Naive thymus-derived CD4-positive, alpha-beta T cell (primary cell): ENCODE measurements at regions of chr1 and their contacts with region 1.

Region 1: DNA sequence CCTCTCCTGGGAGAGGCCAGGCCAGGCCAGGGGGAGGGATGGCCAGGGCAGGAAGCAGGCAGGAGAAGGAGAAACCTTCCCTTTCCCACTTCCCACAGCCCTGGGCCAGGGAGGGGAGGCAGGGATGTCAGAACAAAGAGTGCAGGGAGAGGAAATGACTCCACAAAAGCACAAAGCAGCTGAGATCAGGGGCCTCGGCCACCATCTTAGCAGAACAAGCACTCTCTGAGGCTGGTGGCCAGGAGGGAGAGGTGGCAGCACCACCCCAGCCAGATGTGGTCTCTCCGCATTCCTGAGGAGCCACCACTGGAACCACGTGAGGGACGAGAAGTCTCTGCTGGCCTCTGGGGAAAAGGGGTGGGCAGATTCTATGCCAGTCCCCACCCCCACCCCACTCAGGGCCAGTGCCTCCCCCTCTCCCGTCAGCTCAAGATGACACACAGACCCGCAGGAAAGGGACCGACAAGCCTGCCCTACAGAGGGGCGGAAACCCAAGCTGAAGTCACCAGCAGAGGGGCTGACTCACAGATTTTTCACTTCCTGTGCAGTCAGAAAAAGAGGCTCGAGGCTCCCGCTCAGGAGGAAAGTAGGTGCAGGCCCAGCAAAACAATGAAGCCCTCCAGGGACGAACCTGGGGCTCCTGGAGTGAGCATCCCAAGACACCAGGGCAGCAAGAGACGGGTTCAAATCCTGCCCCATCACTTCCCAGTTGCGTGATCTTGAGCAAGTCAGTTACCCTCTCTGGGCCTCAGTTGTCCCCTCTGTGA is 24.1 kb upstream of the ALDH4A1 start:
- DNase-seq: peak; percentile 43 to 84 (median 73)
- ATAC-seq: peak; percentile 86
- H3K4me3 ChIP-seq: peak overlapping the region; percentile 84
- H3K4me3 Mint-ChIP-seq: peak overlapping the region; percentile 73 to 93 (median 83)
- H3K27ac ChIP-seq: peak overlapping the region; percentile 71
- H3K27ac Mint-ChIP-seq: peak overlapping the region; percentile 57 to 99 (median 95)
- H3K4me1 ChIP-seq: peaks cover 58 to 73% of the 10 kb centered on the region in 2 donors
- H3K4me1 Mint-ChIP-seq: peaks cover 34 to 90% (median 80%) of the 10 kb centered on the region in 7 donors
- H3K27me3 ChIP-seq: no peaks in the 10 kb centered on the region
- H3K27me3 Mint-ChIP-seq: no peaks in the 10 kb centered on the region

Region 2: GRCh38 chr1:18913065-18913835 is 13.2 kb before region 1 on chr1:
- CTCF ChIA-PET with region 1: interaction called, 58 read pairs
- POLR2A ChIA-PET with region 1: interaction called, 8 read pairs
- intact Hi-C with region 1: loop called (anchors 1 kb)
- DNase-seq: peak; percentile 53 to 80 (median 61)
- ATAC-seq: peak; percentile 85
- H3K4me3 ChIP-seq: no peak overlapping the region
- H3K4me3 Mint-ChIP-seq: no peak overlapping the region
- H3K27ac ChIP-seq: no peak overlapping the region
- H3K27ac Mint-ChIP-seq: peak overlapping the region in 4 of 9 donors; percentile 59 to 84 (median 77)
- H3K4me1 ChIP-seq: peaks cover 0 to 4% of the 10 kb centered on the region in 2 donors
- H3K4me1 Mint-ChIP-seq: peaks cover 2 to 15% (median 9%) of the 10 kb centered on the region in 7 donors
- H3K27me3 ChIP-seq: no peaks in the 10 kb centered on the region
- H3K27me3 Mint-ChIP-seq: no peaks in the 10 kb centered on the region

Region 3: DNA sequence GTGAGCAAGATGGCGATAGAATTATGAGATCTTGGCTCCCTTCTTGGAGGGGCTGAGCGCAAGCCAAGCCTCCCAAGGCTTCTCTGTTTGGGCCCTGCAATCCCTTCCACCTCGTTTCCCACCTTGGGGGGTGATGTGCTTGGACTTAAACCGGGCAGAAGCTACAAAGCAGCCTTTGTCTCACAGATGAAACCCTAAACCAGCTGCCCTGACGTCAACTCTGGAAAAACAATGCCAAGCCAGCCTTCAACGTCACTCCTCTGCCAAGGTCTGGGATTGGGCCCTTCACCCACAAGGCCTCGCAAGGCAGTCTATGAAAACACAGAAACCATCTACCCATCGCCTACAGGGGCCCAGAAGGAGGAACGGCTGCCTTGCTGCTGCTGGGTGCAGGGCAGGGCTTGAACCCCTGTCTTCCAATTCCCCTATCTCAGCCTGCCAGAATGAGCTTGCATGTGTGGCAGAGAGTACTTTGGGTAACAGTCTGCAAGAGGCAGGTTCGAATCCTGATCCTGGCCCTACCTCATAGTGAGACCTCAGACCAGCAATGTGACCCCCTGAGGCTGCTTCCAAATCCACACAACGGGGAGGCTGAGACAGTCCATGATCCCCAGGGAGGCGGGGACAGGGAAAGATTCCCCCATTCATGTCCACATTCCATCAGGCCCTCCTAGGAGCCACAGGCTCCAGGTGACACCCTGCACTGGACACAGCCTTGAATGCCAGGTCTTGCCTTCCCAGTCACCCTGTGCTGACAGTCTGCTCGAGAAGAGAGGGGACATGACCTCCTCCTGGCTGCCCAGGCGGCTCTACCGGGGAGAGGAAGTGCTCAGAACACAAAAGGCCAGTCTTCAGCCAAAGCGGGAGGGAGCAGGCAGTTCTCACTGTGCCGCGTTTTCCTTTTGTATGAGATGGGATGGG is 15.0 kb after region 1 on chr1:
- CTCF ChIA-PET with region 1: interaction called, 7 read pairs
- POLR2A ChIA-PET with region 1: interaction called, 13 read pairs
- intact Hi-C with region 1: no loop called
- DNase-seq: no peak
- ATAC-seq: peak; percentile 9
- H3K4me3 ChIP-seq: no peak overlapping the region
- H3K4me3 Mint-ChIP-seq: no peak overlapping the region
- H3K27ac ChIP-seq: no peak overlapping the region
- H3K27ac Mint-ChIP-seq: peak overlapping the region in 4 of 9 donors; percentile 7 to 76 (median 29)
- H3K4me1 ChIP-seq: peaks cover 53 to 59% of the 10 kb centered on the region in 2 donors
- H3K4me1 Mint-ChIP-seq: peaks cover 34 to 80% (median 69%) of the 10 kb centered on the region in 7 donors
- H3K27me3 ChIP-seq: no peaks in the 10 kb centered on the region
- H3K27me3 Mint-ChIP-seq: no peaks in the 10 kb centered on the region

Region 4: DNA sequence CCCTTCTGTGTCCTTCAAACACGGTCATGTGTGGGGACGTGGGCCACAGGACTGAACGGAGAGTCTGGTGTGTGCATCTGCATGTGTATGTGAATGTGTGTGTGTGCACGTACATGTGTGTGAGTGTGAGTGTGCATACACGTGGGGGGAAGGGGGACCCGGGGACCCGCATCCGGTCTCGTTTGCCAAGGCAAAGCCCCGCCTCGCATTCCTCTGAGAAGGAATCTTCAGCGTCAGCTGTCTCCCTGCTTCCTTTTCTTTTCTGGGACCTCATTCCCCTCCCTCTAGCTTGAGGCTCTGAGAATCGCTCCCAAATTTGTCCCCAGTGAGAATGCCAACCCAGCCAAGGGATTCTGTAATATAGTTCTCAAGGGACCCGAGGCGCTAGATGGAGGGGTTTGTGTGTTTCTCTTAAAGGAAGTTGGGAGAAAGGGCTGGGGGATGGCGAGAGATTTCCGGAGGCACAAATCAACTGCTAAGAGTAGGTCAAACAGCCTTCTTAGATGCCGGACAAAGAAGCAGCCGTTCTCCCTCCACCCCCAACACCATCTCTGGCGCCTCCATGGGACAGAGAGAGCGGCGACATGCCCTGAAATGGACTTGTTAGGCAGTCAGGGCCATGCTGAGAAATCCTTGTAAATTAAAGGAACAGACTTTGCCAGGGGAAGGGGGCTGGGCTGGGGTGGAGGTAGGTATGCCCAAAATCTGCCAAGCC is 23.3 kb after region 1 on chr1:
- CTCF ChIA-PET with region 1: interaction called, 25 read pairs
- POLR2A ChIA-PET with region 1: interaction called, 181 read pairs
- intact Hi-C with region 1: loop called (anchors 1 kb)
- DNase-seq: peak in 3 of 9 donors; percentile 19 to 35 (median 32)
- ATAC-seq: no peak
- H3K4me3 ChIP-seq: peak overlapping the region; percentile 50
- H3K4me3 Mint-ChIP-seq: peak overlapping the region; percentile 82 to 94 (median 90)
- H3K27ac ChIP-seq: peak overlapping the region; percentile 98
- H3K27ac Mint-ChIP-seq: peak overlapping the region; percentile 91 to 99 (median 98)
- H3K4me1 ChIP-seq: peaks cover 95 to 99% of the 10 kb centered on the region in 2 donors
- H3K4me1 Mint-ChIP-seq: peaks cover 83 to 98% (median 93%) of the 10 kb centered on the region in 7 donors
- H3K27me3 ChIP-seq: no peaks in the 10 kb centered on the region
- H3K27me3 Mint-ChIP-seq: peaks cover 0 to 2% (median 0%) of the 10 kb centered on the region in 5 donors

Region 5: GRCh38 chr1:18999359-18999758 is 72.9 kb after region 1 on chr1:
- CTCF ChIA-PET with region 1: no interaction called
- POLR2A ChIA-PET with region 1: no interaction called
- intact Hi-C with region 1: no loop called
- DNase-seq: no peak
- ATAC-seq: no peak
- H3K4me3 ChIP-seq: no peak overlapping the region
- H3K4me3 Mint-ChIP-seq: no peak overlapping the region
- H3K27ac ChIP-seq: no peak overlapping the region
- H3K27ac Mint-ChIP-seq: no peak overlapping the region
- H3K4me1 ChIP-seq: no peaks in the 10 kb centered on the region
- H3K4me1 Mint-ChIP-seq: peaks cover 0 to 27% (median 5%) of the 10 kb centered on the region in 7 donors
- H3K27me3 ChIP-seq: no peaks in the 10 kb centered on the region
- H3K27me3 Mint-ChIP-seq: peaks cover 0 to 3% (median 0%) of the 10 kb centered on the region in 5 donors

Region 6: GRCh38 chr1:19074902-19075721 is 148.6 kb after region 1 on chr1:
- CTCF ChIA-PET with region 1: interaction called, 4 read pairs
- POLR2A ChIA-PET with region 1: interaction called, 15 read pairs
- intact Hi-C with region 1: loop called (anchors 1 kb)
- DNase-seq: peak in 1 of 9 donors; percentile 10
- ATAC-seq: peak; percentile 19
- H3K4me3 ChIP-seq: peak overlapping the region; percentile 41
- H3K4me3 Mint-ChIP-seq: peak overlapping the region; percentile 45 to 82 (median 72)
- H3K27ac ChIP-seq: peak overlapping the region; percentile 18
- H3K27ac Mint-ChIP-seq: peak overlapping the region; percentile 32 to 93 (median 76)
- H3K4me1 ChIP-seq: peaks cover 32 to 52% of the 10 kb centered on the region in 2 donors
- H3K4me1 Mint-ChIP-seq: peaks cover 30 to 69% (median 60%) of the 10 kb centered on the region in 7 donors
- H3K27me3 ChIP-seq: no peaks in the 10 kb centered on the region
- H3K27me3 Mint-ChIP-seq: no peaks in the 10 kb centered on the region

Region 7: DNA sequence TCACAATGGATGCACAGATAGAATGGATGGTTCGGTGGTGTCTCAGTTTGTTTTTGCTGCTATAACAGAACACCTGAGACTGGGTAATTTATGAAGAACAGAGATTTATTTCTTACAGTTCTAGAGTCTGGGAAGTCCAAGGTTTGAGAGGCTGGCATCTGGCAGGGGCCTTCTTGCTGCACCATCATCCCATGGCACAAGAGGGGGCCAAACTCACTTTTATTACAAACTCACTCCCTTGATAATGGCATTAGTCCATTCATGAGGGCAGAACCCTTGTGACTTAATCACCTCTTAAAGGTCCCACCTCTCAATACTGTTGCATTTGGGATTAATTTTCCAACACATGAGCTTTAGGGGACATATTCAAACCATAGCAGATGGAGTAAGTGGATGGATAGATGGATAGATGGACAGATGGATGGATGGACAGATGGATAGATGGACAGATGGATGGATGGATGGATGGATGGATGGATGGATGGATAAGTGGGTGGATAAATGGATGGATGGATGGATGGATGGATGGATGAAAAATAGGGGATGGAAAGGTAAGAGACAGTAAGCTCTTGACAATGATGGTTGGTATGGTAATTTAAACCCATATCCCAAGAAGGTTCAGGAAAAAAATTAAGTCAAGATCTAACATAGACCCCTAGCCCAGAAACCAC is 1543.0 kb after region 1 on chr1:
- CTCF ChIA-PET with region 1: no interaction called
- POLR2A ChIA-PET with region 1: no interaction called
- intact Hi-C with region 1: no loop called
- DNase-seq: no peak
- ATAC-seq: no peak
- H3K4me3 ChIP-seq: no peak overlapping the region
- H3K4me3 Mint-ChIP-seq: no peak overlapping the region
- H3K27ac ChIP-seq: no peak overlapping the region
- H3K27ac Mint-ChIP-seq: no peak overlapping the region
- H3K4me1 ChIP-seq: no peaks in the 10 kb centered on the region
- H3K4me1 Mint-ChIP-seq: peaks cover 0 to 4% (median 0%) of the 10 kb centered on the region in 7 donors
- H3K27me3 ChIP-seq: no peaks in the 10 kb centered on the region
- H3K27me3 Mint-ChIP-seq: peaks cover 31 to 60% (median 46%) of the 10 kb centered on the region in 5 donors